Astrocyte of the cerebellum (primary cell): ENCODE measurements at regions of chr9 and their contacts with region 1.

Region 1: DNA sequence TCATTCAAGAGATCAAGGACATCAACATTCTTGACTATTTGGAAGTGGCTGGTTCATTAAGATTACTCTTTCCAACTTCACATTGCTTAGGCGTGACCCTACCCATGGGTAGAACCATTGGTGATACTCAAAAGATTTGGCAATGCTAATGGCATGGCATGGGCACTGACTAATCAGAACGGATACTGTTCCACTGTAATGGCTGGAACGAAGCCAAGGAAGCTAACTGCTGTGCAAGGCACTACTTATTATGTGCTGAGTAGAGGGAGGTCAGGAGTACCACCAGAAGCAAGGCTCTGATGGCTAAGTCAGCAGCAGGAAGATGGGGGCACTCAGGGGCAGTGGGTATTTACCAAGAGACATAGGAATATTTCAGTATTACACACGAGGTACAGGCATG is 31.9 kb downstream of the GNA14 start:
- DNase-seq: no peak
- H3K4me3 ChIP-seq: no peak overlapping the region
- CTCF ChIP-seq: no peak

Region 2: GRCh38 chr9:77582961-77583576 is 33.1 kb before region 1 on chr9:
- in situ Hi-C with region 1: loop called (anchors 5 kb)
- DNase-seq: no peak
- H3K4me3 ChIP-seq: no peak overlapping the region
- CTCF ChIP-seq: no peak

Region 3: GRCh38 chr9:77697238-77697984 is 81.2 kb after region 1 on chr9:
- in situ Hi-C with region 1: no loop called
- DNase-seq: no peak
- H3K4me3 ChIP-seq: no peak overlapping the region
- CTCF ChIP-seq: no peak